Activated CD4-positive, alpha-beta memory T cell treated with anti-CD3 and anti-CD28 coated beads for 36 hours (primary cell): ENCODE measurements at regions of chr11 and their contacts with region 1.

Region 1: GRCh38 chr11:6705905-6706535 is 22.9 kb upstream of the MRPL17 start:
- DNase-seq: peak; percentile 53
- H3K4me3 Mint-ChIP-seq: no peak overlapping the region
- H3K27ac Mint-ChIP-seq: peak overlapping the region; percentile 57
- H3K4me1 Mint-ChIP-seq: peaks cover 18% of the 10 kb centered on the region
- H3K27me3 Mint-ChIP-seq: no peaks in the 10 kb centered on the region

Region 2: DNA sequence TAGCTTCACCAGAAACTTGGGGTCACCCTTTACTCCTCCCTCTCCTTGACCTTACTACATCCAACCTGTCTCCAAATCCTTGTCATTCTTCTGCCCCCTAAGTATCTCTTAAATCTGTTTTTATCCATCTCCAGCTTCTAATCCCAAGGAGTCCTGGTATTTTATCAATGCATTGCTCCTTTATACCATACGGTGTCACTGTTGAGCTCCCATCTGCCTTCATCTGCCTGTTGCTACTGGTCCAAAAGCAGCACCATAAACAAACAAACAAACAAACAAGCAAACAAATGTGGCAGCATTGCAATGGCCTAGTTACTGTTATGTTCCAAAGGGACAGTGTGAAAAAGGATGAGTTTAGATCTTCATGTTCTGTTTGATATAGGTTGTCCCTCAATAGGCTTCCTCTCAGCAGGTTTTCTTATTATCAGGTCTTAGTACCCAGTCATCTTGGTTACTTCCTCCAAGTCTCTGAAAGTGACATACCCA is 174.7 kb before region 1 on chr11:
- CTCF ChIA-PET with region 1: interaction called, 50 read pairs
- POLR2A ChIA-PET with region 1: interaction called, 3 read pairs
- intact Hi-C with region 1: loop called (anchors 1 kb)
- DNase-seq: no peak
- H3K4me3 Mint-ChIP-seq: no peak overlapping the region
- H3K27ac Mint-ChIP-seq: no peak overlapping the region
- H3K4me1 Mint-ChIP-seq: peaks cover 11% of the 10 kb centered on the region
- H3K27me3 Mint-ChIP-seq: no peaks in the 10 kb centered on the region

Region 3: GRCh38 chr11:6682936-6683861 is 22.8 kb before region 1 on chr11 and contains the start of gene MRPL17:
- CTCF ChIA-PET with region 1: interaction called, 19 read pairs
- POLR2A ChIA-PET with region 1: no interaction called
- intact Hi-C with region 1: loop called (anchors 2 kb)
- DNase-seq: peak; percentile 100
- H3K4me3 Mint-ChIP-seq: peak within 1 kb of the TSS; percentile 99
- H3K27ac Mint-ChIP-seq: peak within 1 kb of the TSS; percentile 95
- H3K4me1 Mint-ChIP-seq: peaks cover 36% of the 10 kb centered on the region
- H3K27me3 Mint-ChIP-seq: no peaks in the 10 kb centered on the region
- total RNA-seq, gene MRPL17: 98.5 to 102 TPM

Region 4: DNA sequence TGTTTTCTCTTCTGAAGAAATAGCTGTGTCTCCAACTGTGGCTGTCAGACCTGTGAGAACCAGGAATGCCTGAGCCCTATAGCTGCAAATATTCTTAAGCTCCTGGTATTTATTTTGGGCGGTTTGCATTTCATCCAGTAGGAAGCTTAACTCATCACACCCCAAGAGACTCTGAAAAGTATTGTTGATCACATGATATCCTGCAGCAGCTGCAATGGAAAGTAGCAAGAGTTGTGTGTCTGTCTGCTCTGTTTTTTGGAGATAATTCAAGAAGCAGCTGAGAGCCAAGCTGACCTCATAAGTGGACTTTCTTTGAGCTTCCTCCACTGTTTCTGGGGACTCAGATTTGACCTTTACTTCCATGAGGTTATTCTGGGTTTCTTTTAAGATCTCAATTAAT is 13.6 kb after region 1 on chr11:
- CTCF ChIA-PET with region 1: interaction called, 37 read pairs
- POLR2A ChIA-PET with region 1: no interaction called
- intact Hi-C with region 1: no loop called
- DNase-seq: no peak
- H3K4me3 Mint-ChIP-seq: no peak overlapping the region
- H3K27ac Mint-ChIP-seq: no peak overlapping the region
- H3K4me1 Mint-ChIP-seq: peaks cover 71% of the 10 kb centered on the region
- H3K27me3 Mint-ChIP-seq: no peaks in the 10 kb centered on the region

Region 5: DNA sequence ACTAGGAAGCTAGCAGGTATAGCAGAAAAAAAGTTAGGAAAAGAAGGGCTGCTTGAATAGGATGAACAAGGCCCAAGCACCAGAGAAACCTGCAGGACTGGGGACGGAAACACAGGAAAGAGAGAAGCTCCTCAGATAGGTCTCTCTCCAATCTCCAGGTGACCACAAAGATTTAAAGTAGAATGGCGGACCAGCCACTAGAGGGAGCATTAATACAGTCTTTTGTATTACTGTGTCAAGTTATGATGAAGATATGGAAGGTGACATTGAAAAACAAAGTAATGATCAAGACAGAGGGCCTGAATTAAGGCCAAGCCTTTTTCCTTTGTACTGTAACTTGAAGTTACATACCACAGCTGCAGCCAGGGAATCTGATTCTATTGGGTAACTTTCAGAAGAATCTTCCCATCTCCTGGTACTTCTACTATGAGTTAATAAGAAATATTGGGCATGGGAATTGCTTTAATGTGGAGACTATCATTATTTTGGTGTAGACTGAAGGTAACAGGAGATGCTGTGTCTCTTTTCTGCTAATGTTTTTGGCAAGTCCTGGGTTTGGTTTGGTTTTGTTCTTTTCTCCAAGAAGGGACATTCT is 31.9 kb after region 1 on chr11:
- CTCF ChIA-PET with region 1: interaction called, 19 read pairs
- POLR2A ChIA-PET with region 1: no interaction called
- intact Hi-C with region 1: loop called (anchors 1 kb)
- DNase-seq: peak; percentile 67
- H3K4me3 Mint-ChIP-seq: no peak overlapping the region
- H3K27ac Mint-ChIP-seq: peak overlapping the region; percentile 53
- H3K4me1 Mint-ChIP-seq: peaks cover 89% of the 10 kb centered on the region
- H3K27me3 Mint-ChIP-seq: no peaks in the 10 kb centered on the region